CD4-positive, alpha-beta memory T cell (primary cell): ENCODE measurements at regions of chr9 and their contacts with region 1.

Region 1: GRCh38 chr9:15135164-15135792 is 171.7 kb downstream of the TTC39B start:
- DNase-seq: peak; percentile 41 to 59 (median 54)
- H3K4me3 ChIP-seq: no peak overlapping the region
- H3K4me3 Mint-ChIP-seq: peak overlapping the region in 2 of 8 donors; percentile 33 to 42
- H3K27ac ChIP-seq: no peak overlapping the region
- H3K27ac Mint-ChIP-seq: no peak overlapping the region
- H3K4me1 ChIP-seq: no peaks in the 10 kb centered on the region
- H3K4me1 Mint-ChIP-seq: peaks cover 4 to 5% (median 5%) of the 10 kb centered on the region in 4 donors
- H3K27me3 ChIP-seq: no peaks in the 10 kb centered on the region
- H3K27me3 Mint-ChIP-seq: peaks cover 0 to 1% of the 10 kb centered on the region in 2 donors

Region 2: DNA sequence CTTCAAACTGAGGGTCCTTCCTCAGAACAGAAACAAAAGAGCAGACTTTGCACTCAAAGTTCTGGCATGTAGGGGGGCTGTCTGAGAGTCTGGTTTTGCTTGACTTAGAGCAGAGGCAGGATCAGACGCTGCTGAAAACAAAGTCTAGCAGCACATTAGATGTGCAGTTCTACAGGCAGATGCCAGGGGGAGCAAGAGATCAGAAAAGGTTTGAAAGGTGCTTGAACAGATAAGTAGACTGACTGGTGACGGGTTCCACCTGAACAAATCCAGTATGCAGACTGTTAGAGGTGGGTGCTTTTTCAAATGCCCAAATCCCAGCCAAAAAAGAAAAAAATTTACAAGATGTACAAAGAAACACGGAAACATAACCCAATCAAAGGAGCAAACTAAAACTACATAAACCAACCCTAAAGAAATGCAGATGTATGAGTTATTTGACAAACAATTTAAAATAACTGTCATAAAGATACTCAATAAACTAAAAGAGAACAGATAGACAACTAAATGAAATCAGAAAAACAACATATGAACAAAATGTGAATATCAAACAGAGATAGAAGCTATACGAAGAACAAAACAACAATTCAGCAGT is 30.4 kb before region 1 on chr9:
- CTCF ChIA-PET with region 1: interaction called, 126 read pairs
- POLR2A ChIA-PET with region 1: interaction called, 5 read pairs
- intact Hi-C with region 1: loop called (anchors 1 kb)
- DNase-seq: peak in 4 of 5 donors; percentile 46 to 52 (median 50)
- H3K4me3 ChIP-seq: no peak overlapping the region
- H3K4me3 Mint-ChIP-seq: peak overlapping the region in 1 of 8 donors; percentile 22
- H3K27ac ChIP-seq: no peak overlapping the region
- H3K27ac Mint-ChIP-seq: no peak overlapping the region
- H3K4me1 ChIP-seq: no peaks in the 10 kb centered on the region
- H3K4me1 Mint-ChIP-seq: no peaks in the 10 kb centered on the region
- H3K27me3 ChIP-seq: no peaks in the 10 kb centered on the region
- H3K27me3 Mint-ChIP-seq: peaks cover 8 to 11% of the 10 kb centered on the region in 2 donors

Region 3: DNA sequence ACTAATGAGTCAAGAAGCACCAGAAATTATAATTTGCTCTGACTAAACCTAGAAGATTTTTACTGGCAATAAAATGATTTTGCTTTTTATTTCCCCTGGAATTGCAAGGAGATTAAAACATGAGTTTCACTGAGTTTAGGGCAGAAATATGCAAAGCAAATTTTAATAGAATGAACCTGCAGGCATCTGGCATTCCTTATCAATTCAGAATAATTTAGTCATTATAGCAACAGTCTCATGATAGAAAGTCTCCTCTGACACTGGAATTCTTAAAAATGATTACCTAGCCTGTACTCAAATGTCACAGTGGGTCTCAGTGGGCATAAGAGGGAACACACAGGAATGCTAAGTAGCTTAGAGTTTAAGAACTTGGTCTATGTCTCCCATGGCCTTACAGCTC is 24.2 kb before region 1 on chr9:
- CTCF ChIA-PET with region 1: interaction called, 126 read pairs
- POLR2A ChIA-PET with region 1: no interaction called
- intact Hi-C with region 1: no loop called
- DNase-seq: no peak
- H3K4me3 ChIP-seq: no peak overlapping the region
- H3K4me3 Mint-ChIP-seq: no peak overlapping the region
- H3K27ac ChIP-seq: no peak overlapping the region
- H3K27ac Mint-ChIP-seq: no peak overlapping the region
- H3K4me1 ChIP-seq: no peaks in the 10 kb centered on the region
- H3K4me1 Mint-ChIP-seq: no peaks in the 10 kb centered on the region
- H3K27me3 ChIP-seq: no peaks in the 10 kb centered on the region
- H3K27me3 Mint-ChIP-seq: peaks cover 7 to 9% of the 10 kb centered on the region in 2 donors

Region 4: GRCh38 chr9:15116130-15116580 is 19.1 kb before region 1 on chr9:
- CTCF ChIA-PET with region 1: interaction called, 19 read pairs
- POLR2A ChIA-PET with region 1: no interaction called
- intact Hi-C with region 1: no loop called
- DNase-seq: no peak
- H3K4me3 ChIP-seq: no peak overlapping the region
- H3K4me3 Mint-ChIP-seq: no peak overlapping the region
- H3K27ac ChIP-seq: no peak overlapping the region
- H3K27ac Mint-ChIP-seq: no peak overlapping the region
- H3K4me1 ChIP-seq: peaks cover 2% of the 10 kb centered on the region
- H3K4me1 Mint-ChIP-seq: peaks cover 5 to 7% (median 6%) of the 10 kb centered on the region in 4 donors
- H3K27me3 ChIP-seq: no peaks in the 10 kb centered on the region
- H3K27me3 Mint-ChIP-seq: peaks cover 10 to 12% of the 10 kb centered on the region in 2 donors